Activated CD4-positive, alpha-beta memory T cell treated with anti-CD3 and anti-CD28 coated beads for 36 hours (primary cell): ENCODE measurements at regions of chr9 and their contacts with region 1.

Region 1: GRCh38 chr9:137029058-137029936 is 1.3 kb upstream of the ABCA2 start:
- DNase-seq: peak; percentile 84
- H3K4me3 Mint-ChIP-seq: peak overlapping the region; percentile 55
- H3K27ac Mint-ChIP-seq: peak overlapping the region; percentile 1
- H3K4me1 Mint-ChIP-seq: peaks cover 46% of the 10 kb centered on the region
- H3K27me3 Mint-ChIP-seq: no peaks in the 10 kb centered on the region

Region 2: DNA sequence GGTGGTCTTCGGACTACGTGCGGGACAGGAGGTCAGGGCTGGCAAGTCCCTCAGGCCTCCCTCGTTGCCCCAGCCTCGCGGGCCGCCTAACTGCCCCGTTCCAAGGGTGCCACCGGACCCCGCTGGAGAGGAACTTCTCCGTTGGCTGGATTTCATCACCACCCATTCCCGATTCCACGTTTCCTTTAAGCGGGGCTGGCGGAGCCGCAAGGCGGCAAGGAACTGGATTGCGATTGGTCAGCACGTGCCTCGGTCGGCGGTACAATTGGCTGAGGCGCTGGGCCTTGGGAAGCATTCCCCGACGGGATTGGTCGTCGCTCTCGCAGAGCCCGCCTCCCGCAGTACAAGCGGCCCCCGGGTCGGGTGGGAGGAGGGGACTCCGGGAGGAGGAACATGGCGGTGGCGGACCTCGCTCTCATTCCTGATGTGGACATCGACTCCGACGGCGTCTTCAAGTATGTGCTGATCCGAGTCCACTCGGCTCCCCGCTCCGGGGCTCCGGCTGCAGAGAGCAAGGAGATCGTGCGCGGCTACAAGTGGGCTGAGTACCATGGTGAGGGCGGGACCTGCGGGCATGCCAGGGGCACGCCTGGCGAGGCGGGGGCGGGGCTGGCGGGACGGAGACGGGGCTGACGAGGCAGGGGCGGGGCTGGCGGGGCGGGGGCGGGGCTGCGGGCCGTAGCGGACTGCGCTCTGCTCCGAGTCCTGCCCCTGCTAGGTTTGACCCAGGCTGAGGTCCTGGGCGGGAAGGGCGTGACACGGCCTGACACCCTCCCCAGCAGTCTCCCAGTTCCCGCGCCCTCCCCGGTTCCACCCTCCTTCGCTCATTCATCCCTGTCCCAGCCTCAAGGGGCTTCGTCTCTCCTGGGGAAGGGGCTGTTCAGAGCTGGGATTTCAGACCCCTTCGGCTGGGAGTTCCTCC is 180.0 kb before region 1 on chr9 and contains the start of gene PHPT1:
- CTCF ChIA-PET with region 1: interaction called, 22 read pairs
- POLR2A ChIA-PET with region 1: no interaction called
- intact Hi-C with region 1: no loop called
- DNase-seq: peak; percentile 98
- H3K4me3 Mint-ChIP-seq: peak within 1 kb of the TSS; percentile 85
- H3K27ac Mint-ChIP-seq: peak within 1 kb of the TSS; percentile 90
- H3K4me1 Mint-ChIP-seq: peaks cover 19% of the 10 kb centered on the region
- H3K27me3 Mint-ChIP-seq: peaks cover 17% of the 10 kb centered on the region
- total RNA-seq, gene PHPT1: 92.2 to 95.5 TPM

Region 3: GRCh38 chr9:136978073-136978864 is 51.0 kb before region 1 on chr9:
- CTCF ChIA-PET with region 1: interaction called, 31 read pairs
- POLR2A ChIA-PET with region 1: no interaction called
- intact Hi-C with region 1: no loop called
- DNase-seq: peak; percentile 77
- H3K4me3 Mint-ChIP-seq: no peak overlapping the region
- H3K27ac Mint-ChIP-seq: no peak overlapping the region
- H3K4me1 Mint-ChIP-seq: peaks cover 17% of the 10 kb centered on the region
- H3K27me3 Mint-ChIP-seq: peaks cover 1% of the 10 kb centered on the region

Region 4: GRCh38 chr9:137046098-137046787 is 16.9 kb after region 1 on chr9 and contains the start of gene NPDC1:
- CTCF ChIA-PET with region 1: interaction called, 60 read pairs
- POLR2A ChIA-PET with region 1: no interaction called
- intact Hi-C with region 1: no loop called
- DNase-seq: peak; percentile 90
- H3K4me3 Mint-ChIP-seq: peak within 1 kb of the TSS; percentile 67
- H3K27ac Mint-ChIP-seq: no peak within 1 kb of the TSS
- H3K4me1 Mint-ChIP-seq: peaks cover 10% of the 10 kb centered on the region
- H3K27me3 Mint-ChIP-seq: peaks cover 34% of the 10 kb centered on the region
- total RNA-seq, gene NPDC1: 36.0 to 42.6 TPM

Region 5: DNA sequence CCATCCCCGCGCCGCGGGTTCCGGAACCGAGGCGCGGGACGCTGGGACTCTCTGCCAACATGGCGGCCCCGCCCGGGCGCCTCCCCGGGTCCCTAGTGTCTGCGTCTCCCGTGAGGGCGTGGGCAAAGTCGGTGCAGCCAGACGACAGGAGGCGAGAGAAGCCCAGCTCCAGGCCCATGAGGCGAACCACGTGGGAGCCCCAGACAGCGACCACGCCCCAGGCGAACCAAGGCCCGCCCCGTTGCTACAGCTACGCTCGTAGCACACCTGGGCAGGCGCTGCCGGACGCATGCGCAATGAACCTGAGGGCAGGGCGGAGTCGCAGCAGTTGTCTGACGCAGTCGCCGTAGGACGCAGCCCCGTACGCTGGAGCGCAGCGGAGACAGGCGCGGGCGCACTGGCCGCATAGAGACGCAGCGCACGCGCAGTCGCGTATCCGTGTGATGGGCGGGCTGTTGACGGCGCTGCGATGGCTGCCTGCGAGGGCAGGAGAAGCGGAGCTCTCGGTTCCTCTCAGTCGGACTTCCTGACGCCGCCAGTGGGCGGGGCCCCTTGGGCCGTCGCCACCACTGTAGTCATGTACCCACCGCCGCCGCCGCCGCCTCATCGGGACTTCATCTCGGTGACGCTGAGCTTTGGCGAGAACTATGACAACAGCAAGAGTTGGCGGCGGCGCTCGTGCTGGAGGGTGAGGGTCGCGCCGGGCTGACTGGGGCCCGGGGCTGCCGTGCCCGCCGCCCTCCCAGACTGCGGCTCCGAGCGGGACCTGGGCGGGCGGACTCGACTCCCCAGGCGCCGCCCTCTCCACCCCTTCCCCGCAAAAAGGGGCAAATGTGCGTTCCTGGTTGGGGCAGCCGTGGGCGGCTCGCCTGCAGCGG is 57.5 kb after region 1 on chr9 and contains the start of gene MAN1B1:
- CTCF ChIA-PET with region 1: interaction called, 35 read pairs
- POLR2A ChIA-PET with region 1: interaction called, 3 read pairs
- intact Hi-C with region 1: no loop called
- DNase-seq: peak; percentile 100
- H3K4me3 Mint-ChIP-seq: peak within 1 kb of the TSS; percentile 88
- H3K27ac Mint-ChIP-seq: peak within 1 kb of the TSS; percentile 92
- H3K4me1 Mint-ChIP-seq: peaks cover 40% of the 10 kb centered on the region
- H3K27me3 Mint-ChIP-seq: no peaks in the 10 kb centered on the region
- total RNA-seq, gene MAN1B1: 32.9 to 33.1 TPM

Region 6: DNA sequence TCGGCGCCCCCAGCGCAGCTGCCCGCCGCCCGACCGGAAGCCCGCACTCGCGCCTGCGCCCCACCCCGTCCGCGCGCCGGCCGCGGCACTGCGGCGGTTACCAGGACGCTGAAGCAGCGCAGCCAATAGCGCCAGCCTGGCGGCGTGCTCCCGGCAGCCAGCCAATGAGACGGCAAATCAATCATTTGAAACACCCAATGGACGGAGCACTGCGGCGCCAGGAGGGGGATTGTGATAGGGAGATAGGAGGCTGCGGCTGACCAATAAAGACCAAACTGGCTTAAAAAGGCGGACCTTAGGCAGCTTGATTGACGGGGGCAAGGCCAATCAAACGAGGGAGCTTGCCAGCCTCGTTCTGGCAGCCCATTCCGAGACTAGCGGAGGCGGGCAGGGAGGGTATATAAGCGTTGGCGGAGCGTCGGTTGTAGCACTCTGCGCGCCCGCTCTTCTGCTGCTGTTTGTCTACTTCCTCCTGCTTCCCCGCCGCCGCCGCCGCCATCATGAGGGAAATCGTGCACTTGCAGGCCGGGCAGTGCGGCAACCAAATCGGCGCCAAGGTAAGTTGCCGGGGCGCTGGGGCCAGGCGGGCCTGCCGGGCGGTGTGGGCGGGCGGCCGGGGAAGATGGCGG is 211.7 kb after region 1 on chr9 and contains the start of gene TUBB4B:
- CTCF ChIA-PET with region 1: interaction called, 11 read pairs
- POLR2A ChIA-PET with region 1: no interaction called
- intact Hi-C with region 1: no loop called
- DNase-seq: peak; percentile 99
- H3K4me3 Mint-ChIP-seq: peak within 1 kb of the TSS; percentile 88
- H3K27ac Mint-ChIP-seq: peak within 1 kb of the TSS; percentile 94
- H3K4me1 Mint-ChIP-seq: peaks cover 21% of the 10 kb centered on the region
- H3K27me3 Mint-ChIP-seq: no peaks in the 10 kb centered on the region
- total RNA-seq, gene TUBB4B: 320 to 325 TPM